B cell (primary cell): ENCODE measurements at regions of chr1 and their contacts with region 1.

Region 1: DNA sequence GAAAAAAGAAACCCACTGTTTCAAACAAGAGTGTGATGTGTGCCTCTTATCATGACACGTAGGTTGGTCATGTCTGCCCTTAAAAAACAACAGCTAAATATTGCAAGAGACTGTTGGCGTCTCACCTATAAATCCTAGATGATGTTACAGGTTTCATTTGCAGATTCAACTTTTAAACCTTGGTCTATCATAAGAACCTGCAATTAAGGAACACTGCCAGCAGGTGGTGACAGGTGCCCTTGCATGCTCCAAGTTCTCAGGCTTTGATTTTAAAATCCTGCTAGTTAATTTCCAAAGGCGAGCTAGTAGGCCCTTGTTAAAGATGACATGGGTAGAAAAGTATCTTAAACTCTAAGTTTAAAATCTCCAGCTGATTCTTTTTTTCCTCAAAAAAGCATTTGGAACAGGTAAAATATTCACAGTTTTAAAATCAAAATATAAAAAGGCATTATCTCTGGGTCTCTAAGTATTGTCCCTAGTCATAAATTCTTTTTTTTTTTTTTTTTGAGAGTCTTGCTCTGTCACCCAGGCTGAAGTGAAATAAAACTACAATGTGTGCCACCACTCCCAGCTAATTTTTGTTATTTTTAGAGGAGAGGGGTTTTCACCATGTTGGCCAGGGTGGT is 39.1 kb downstream of the CLSTN1 start:
- DNase-seq: peak; percentile 80
- ATAC-seq: peak; percentile 48
- H3K4me3 ChIP-seq: no peak overlapping the region
- H3K4me3 Mint-ChIP-seq: no peak overlapping the region
- H3K27ac ChIP-seq: no peak overlapping the region
- H3K27ac Mint-ChIP-seq: peak overlapping the region; percentile 32
- H3K4me1 ChIP-seq: peaks cover 18 to 29% of the 10 kb centered on the region in 2 donors
- H3K4me1 Mint-ChIP-seq: peaks cover 25% of the 10 kb centered on the region
- H3K27me3 ChIP-seq: no peaks in the 10 kb centered on the region
- H3K27me3 Mint-ChIP-seq: no peaks in the 10 kb centered on the region
- CTCF ChIP-seq: peak; percentile 92

Region 2: GRCh38 chr1:9520411-9520810 is 264.2 kb before region 1 on chr1:
- CTCF ChIA-PET with region 1: no interaction called
- POLR2A ChIA-PET with region 1: no interaction called
- intact Hi-C with region 1: no loop called
- DNase-seq: no peak
- ATAC-seq: no peak
- H3K4me3 ChIP-seq: no peak overlapping the region
- H3K4me3 Mint-ChIP-seq: no peak overlapping the region
- H3K27ac ChIP-seq: no peak overlapping the region
- H3K27ac Mint-ChIP-seq: no peak overlapping the region
- H3K4me1 ChIP-seq: no peaks in the 10 kb centered on the region
- H3K4me1 Mint-ChIP-seq: no peaks in the 10 kb centered on the region
- H3K27me3 ChIP-seq: no peaks in the 10 kb centered on the region
- H3K27me3 Mint-ChIP-seq: no peaks in the 10 kb centered on the region
- CTCF ChIP-seq: no peak

Region 3: GRCh38 chr1:9615316-9616063 is 169.1 kb before region 1 on chr1:
- CTCF ChIA-PET with region 1: interaction called, 38 read pairs
- POLR2A ChIA-PET with region 1: no interaction called
- intact Hi-C with region 1: no loop called
- DNase-seq: peak; percentile 72
- ATAC-seq: peak; percentile 96
- H3K4me3 ChIP-seq: no peak overlapping the region
- H3K4me3 Mint-ChIP-seq: no peak overlapping the region
- H3K27ac ChIP-seq: no peak overlapping the region
- H3K27ac Mint-ChIP-seq: no peak overlapping the region
- H3K4me1 ChIP-seq: peaks cover 4 to 9% of the 10 kb centered on the region in 2 donors
- H3K4me1 Mint-ChIP-seq: peaks cover 2% of the 10 kb centered on the region
- H3K27me3 ChIP-seq: no peaks in the 10 kb centered on the region
- H3K27me3 Mint-ChIP-seq: peaks cover 3% of the 10 kb centered on the region
- CTCF ChIP-seq: peak; percentile 76

Region 4: DNA sequence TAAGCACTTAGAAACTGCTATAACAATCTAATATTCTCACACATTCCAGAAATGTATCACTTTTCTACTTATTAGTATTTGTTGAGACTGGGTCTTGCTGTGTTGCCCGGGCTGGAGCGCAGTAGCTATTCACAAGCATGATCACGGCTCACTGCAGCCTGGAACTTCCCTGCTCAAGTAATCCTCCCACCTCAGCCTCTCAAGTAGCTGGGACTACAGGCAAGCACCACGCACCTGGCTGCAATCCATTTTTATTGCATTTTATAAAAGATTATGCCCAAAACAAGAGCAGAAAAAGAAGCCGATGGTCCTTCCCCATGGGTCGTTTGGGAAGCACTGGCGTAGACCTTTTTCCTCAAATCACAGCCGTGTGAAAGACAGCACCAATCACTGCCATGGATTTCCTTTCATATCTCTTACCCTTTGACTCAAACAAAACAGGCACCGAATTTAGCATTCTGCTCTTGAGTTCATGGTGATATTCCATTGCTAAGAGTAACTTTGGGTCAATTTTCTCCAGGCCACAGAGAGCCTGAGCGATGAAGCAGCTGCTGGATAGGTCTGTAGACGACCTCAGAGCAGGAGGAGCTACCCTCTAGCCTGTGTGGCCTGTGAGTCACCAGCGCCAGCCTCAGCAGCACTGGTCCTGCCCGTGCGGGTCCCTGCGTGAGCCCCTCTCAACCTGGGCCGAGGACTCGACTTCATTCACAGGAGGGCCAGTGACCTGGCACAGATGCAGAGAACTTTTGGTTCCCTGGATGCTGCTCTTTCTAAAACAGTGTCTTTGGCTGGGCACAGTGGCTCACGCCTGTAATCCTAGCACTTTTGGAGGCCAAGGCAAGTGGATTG is 52.3 kb before region 1 on chr1:
- CTCF ChIA-PET with region 1: no interaction called
- POLR2A ChIA-PET with region 1: no interaction called
- intact Hi-C with region 1: no loop called
- DNase-seq: no peak
- ATAC-seq: no peak
- H3K4me3 ChIP-seq: no peak overlapping the region
- H3K4me3 Mint-ChIP-seq: no peak overlapping the region
- H3K27ac ChIP-seq: peak overlapping the region in 1 of 2 donors; percentile 53
- H3K27ac Mint-ChIP-seq: peak overlapping the region; percentile 47
- H3K4me1 ChIP-seq: peaks cover 11 to 21% of the 10 kb centered on the region in 2 donors
- H3K4me1 Mint-ChIP-seq: peaks cover 31% of the 10 kb centered on the region
- H3K27me3 ChIP-seq: no peaks in the 10 kb centered on the region
- H3K27me3 Mint-ChIP-seq: no peaks in the 10 kb centered on the region
- CTCF ChIP-seq: no peak

Region 5: DNA sequence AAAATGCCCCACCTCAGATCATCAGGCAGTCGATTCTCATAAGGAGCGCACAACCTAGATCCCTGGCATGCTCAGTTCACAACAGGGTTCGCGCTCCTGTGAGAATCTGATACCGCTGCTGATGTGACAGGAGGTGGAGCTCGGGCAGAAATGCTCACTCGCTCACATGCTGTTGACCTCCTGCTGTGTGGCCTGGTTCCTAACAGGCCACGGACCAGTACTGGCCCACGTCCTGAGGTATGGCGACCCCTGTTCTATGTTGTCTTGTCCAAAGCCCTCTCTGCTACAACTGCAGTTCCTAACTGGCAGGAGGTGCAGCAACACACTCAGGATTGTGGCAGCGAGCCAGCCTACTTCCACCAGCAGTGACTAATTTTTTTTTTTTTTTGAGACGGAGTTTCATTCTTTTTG is 31.5 kb before region 1 on chr1:
- CTCF ChIA-PET with region 1: no interaction called
- POLR2A ChIA-PET with region 1: no interaction called
- intact Hi-C with region 1: no loop called
- DNase-seq: no peak
- ATAC-seq: no peak
- H3K4me3 ChIP-seq: no peak overlapping the region
- H3K4me3 Mint-ChIP-seq: no peak overlapping the region
- H3K27ac ChIP-seq: no peak overlapping the region
- H3K27ac Mint-ChIP-seq: no peak overlapping the region
- H3K4me1 ChIP-seq: no peaks in the 10 kb centered on the region
- H3K4me1 Mint-ChIP-seq: no peaks in the 10 kb centered on the region
- H3K27me3 ChIP-seq: no peaks in the 10 kb centered on the region
- H3K27me3 Mint-ChIP-seq: no peaks in the 10 kb centered on the region
- CTCF ChIP-seq: no peak

Region 6: GRCh38 chr1:9805006-9805508 is 20.4 kb after region 1 on chr1:
- CTCF ChIA-PET with region 1: interaction called, 82 read pairs
- POLR2A ChIA-PET with region 1: interaction called, 10 read pairs
- intact Hi-C with region 1: no loop called
- DNase-seq: no peak
- ATAC-seq: no peak
- H3K4me3 ChIP-seq: no peak overlapping the region
- H3K4me3 Mint-ChIP-seq: no peak overlapping the region
- H3K27ac ChIP-seq: no peak overlapping the region
- H3K27ac Mint-ChIP-seq: no peak overlapping the region
- H3K4me1 ChIP-seq: peaks cover 10 to 16% of the 10 kb centered on the region in 2 donors
- H3K4me1 Mint-ChIP-seq: peaks cover 40% of the 10 kb centered on the region
- H3K27me3 ChIP-seq: no peaks in the 10 kb centered on the region
- H3K27me3 Mint-ChIP-seq: no peaks in the 10 kb centered on the region
- CTCF ChIP-seq: no peak

Region 7: DNA sequence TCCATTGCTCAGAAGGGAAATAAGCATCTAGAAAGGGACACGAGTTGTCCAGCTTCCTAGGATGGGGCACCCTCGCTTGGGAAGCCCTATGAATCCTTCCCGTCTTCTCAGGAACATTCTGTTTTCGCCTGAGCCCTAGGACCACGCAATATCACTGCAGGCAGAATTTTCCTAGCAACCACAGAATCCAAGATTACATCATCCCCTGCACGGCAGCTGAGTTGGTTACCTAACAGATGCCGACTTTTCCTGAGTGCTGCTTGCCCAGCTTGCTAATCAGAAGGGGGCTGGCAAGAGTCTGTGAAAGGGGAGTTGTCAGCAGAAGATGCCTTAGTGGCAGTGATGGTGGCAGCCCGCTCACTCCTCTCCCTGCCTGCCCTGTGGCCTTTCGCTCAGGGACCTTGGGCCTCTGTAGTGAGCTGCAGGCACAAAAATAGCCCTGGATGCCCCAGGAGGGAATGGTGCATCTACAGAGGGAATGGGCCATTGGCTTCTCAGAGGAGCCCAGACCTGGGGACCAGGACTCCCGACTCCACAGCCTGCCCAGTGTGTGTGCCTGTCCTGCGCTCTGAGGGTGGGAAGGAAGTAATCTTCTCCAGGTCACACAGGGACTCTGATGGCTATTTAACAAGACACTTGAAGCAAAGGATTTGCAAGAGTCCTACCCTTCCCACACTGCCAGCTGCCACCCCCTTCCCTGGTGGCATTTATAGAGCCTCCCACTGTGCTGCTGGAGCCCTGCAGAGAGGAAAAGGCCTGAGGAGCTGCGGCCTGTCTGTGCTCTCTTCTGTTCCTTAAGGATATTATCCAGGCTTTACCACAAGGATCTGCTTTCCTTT is 68.0 kb after region 1 on chr1:
- CTCF ChIA-PET with region 1: interaction called, 30 read pairs
- POLR2A ChIA-PET with region 1: interaction called, 5 read pairs
- intact Hi-C with region 1: no loop called
- DNase-seq: no peak
- ATAC-seq: no peak
- H3K4me3 ChIP-seq: no peak overlapping the region
- H3K4me3 Mint-ChIP-seq: no peak overlapping the region
- H3K27ac ChIP-seq: no peak overlapping the region
- H3K27ac Mint-ChIP-seq: no peak overlapping the region
- H3K4me1 ChIP-seq: peaks cover 21 to 36% of the 10 kb centered on the region in 2 donors
- H3K4me1 Mint-ChIP-seq: peaks cover 26% of the 10 kb centered on the region
- H3K27me3 ChIP-seq: no peaks in the 10 kb centered on the region
- H3K27me3 Mint-ChIP-seq: no peaks in the 10 kb centered on the region
- CTCF ChIP-seq: no peak

Region 8: GRCh38 chr1:9874959-9875635 is 90.5 kb after region 1 on chr1:
- CTCF ChIA-PET with region 1: interaction called, 281 read pairs
- POLR2A ChIA-PET with region 1: no interaction called
- intact Hi-C with region 1: no loop called
- DNase-seq: peak; percentile 86
- ATAC-seq: peak; percentile 98
- H3K4me3 ChIP-seq: no peak overlapping the region
- H3K4me3 Mint-ChIP-seq: no peak overlapping the region
- H3K27ac ChIP-seq: no peak overlapping the region
- H3K27ac Mint-ChIP-seq: no peak overlapping the region
- H3K4me1 ChIP-seq: peaks cover 0 to 9% of the 10 kb centered on the region in 2 donors
- H3K4me1 Mint-ChIP-seq: peaks cover 4% of the 10 kb centered on the region
- H3K27me3 ChIP-seq: no peaks in the 10 kb centered on the region
- H3K27me3 Mint-ChIP-seq: no peaks in the 10 kb centered on the region
- CTCF ChIP-seq: peak; percentile 95

Region 9: DNA sequence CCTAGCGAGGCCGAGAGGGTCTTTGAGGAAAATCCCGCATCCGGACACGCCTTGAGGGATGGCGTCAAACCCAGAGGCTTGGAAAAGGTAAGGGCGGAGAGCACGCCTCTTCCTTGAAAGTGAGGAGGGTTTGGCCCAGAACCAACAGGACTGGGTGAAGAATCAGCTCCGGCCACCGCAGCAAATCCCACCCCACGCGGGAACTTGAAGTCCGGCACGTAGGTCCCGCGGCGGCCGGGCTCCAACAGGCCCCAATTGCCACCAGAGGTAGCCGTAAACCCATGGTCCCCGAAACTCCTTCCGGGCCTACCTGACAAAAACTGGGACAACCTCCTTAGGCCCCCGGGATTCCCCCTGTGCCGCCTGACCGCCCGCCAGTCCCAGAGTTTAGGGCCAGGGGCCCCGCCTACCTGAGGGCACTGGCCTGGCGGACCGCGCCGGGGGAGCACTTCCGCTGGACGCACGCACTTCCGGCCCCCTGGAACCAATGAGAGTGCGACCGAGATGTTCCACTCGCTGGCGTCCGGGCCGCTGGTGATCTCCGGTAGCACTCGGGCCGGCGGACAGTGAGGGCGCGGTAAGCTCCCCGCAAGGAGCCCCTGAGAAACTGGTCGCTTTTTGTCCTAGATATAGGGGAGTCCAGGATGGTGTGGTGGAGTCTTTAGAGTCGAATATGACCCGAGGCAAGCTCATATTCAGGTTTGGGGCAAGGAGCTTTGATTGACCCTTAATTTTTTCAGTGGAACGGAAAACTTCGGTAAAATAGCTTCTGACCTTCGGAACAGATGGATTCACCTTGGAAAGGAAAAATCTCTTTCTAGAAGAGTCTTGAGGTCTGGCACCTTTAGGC is 158.5 kb after region 1 on chr1 and contains the starts of genes LZIC and NMNAT1:
- CTCF ChIA-PET with region 1: interaction called, 9 read pairs
- POLR2A ChIA-PET with region 1: no interaction called
- intact Hi-C with region 1: loop called (anchors 2 kb)
- DNase-seq: peak; percentile 96
- ATAC-seq: peak; percentile 95
- H3K4me3 ChIP-seq: peak within 1 kb of the TSS; percentile 67 to 98 (median 88)
- H3K4me3 Mint-ChIP-seq: peak within 1 kb of the TSS; percentile 95
- H3K27ac ChIP-seq: peak within 1 kb of the TSS; percentile 97
- H3K27ac Mint-ChIP-seq: peak within 1 kb of the TSS; percentile 97
- H3K4me1 ChIP-seq: peaks cover 14 to 27% of the 10 kb centered on the region in 2 donors
- H3K4me1 Mint-ChIP-seq: peaks cover 20% of the 10 kb centered on the region
- H3K27me3 ChIP-seq: no peaks in the 10 kb centered on the region
- H3K27me3 Mint-ChIP-seq: no peaks in the 10 kb centered on the region
- CTCF ChIP-seq: no peak
- total RNA-seq, gene LZIC: 21.5 and 26.0 TPM in 2 replicates
- total RNA-seq, gene NMNAT1: 8.0 and 8.9 TPM in 2 replicates